Dendritic cell treated with granulocyte-macrophage colony-stimulating factor and Interleukin-4, amounts not matched to agents 40 ng/mL and 50 ng/mL, for 4 days (primary cell): ENCODE measurements at regions of chr20 and their contacts with region 1.

Region 1: GRCh38 chr20:38229376-38230252 is 30.9 kb downstream of the KIAA1755 start:
- H3K4me3 Mint-ChIP-seq: no peak overlapping the region
- H3K27ac Mint-ChIP-seq: no peak overlapping the region
- H3K4me1 Mint-ChIP-seq: peaks cover 24% of the 10 kb centered on the region
- H3K27me3 Mint-ChIP-seq: peaks cover 19% of the 10 kb centered on the region

Region 2: DNA sequence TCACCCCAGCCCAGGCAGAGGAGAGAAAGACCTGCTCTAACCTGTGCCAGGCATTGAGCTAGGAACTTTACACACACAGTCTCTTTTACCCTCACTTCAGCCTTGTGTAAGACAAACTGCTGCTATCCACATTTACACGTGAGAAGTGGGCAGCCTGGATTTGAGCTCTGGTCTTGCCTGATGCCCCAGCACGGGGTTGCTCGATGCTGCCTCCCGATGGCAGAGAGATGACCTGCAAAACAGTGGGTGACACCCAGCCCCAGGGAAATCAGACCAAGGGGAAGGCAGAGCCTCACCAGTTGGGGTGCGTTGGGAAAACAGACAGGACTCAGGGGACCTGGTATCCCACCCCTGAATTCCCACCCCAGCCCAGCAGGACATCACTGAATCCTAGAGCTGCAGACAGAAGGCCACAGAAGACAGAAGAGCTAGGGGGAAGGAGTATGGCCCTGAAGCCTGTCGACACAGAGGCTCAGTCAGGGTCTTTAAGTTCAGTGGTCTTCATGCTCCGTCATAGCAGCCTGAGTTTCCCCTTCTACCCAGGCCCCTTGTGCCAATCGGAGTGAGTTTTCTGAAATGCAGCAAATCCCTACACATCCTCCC is 75.3 kb after region 1 on chr20:
- intact Hi-C with region 1: loop called (anchors 1 kb)
- H3K4me3 Mint-ChIP-seq: no peak overlapping the region
- H3K27ac Mint-ChIP-seq: peak overlapping the region; percentile 59
- H3K4me1 Mint-ChIP-seq: peaks cover 71% of the 10 kb centered on the region
- H3K27me3 Mint-ChIP-seq: peaks cover 23% of the 10 kb centered on the region

Region 3: GRCh38 chr20:38321959-38322598 is 92.5 kb after region 1 on chr20:
- intact Hi-C with region 1: loop called (anchors 1 kb)
- H3K4me3 Mint-ChIP-seq: no peak overlapping the region
- H3K27ac Mint-ChIP-seq: no peak overlapping the region
- H3K4me1 Mint-ChIP-seq: peaks cover 17% of the 10 kb centered on the region
- H3K27me3 Mint-ChIP-seq: peaks cover 25% of the 10 kb centered on the region

Region 4: GRCh38 chr20:38590676-38591471 is 361.3 kb after region 1 on chr20:
- intact Hi-C with region 1: no loop called
- H3K4me3 Mint-ChIP-seq: no peak overlapping the region
- H3K27ac Mint-ChIP-seq: no peak overlapping the region
- H3K4me1 Mint-ChIP-seq: no peaks in the 10 kb centered on the region
- H3K27me3 Mint-ChIP-seq: no peaks in the 10 kb centered on the region